B cell (primary cell): ENCODE measurements at regions of chr13 and their contacts with region 1.

Region 1: DNA sequence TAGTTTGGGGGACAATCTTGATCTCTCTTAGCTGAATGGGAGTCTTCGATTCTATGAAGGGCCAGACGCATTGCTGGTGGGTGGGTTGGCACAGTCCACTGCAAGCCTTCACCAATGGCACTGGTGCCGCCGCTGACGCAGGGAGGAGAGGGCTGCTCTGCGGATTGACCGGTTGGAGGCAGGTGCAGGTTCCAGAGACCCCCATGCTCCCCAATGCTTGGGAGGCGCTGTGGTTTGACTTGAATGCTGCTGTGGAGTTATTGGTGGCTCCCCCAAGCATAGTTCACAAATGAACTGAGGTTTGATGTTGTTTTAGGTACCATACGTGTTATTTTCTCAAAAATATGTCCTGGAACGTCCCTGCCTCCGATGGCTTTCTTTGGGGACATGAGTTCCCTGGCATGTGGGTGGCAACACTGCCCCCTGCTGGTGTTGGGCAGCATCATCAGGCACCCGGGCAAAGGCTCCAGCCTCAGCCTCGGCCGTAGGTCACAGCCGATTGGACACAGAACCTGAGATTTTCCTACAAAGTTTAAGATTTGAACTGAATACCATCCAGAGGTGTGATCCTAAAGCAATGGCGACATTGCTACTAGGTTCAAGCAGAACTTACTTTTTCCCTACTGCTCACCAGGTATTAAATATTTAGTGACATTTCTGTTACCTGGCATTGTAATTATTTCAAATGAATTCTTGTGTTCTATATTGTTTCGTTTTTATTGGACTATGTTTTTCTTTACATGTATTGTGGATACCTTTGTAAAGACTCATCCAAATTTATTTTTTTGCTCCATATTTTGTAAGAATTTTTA is 95.5 kb downstream of the ANKRD10 start:
- DNase-seq: peak; percentile 82
- ATAC-seq: peak; percentile 84
- H3K4me3 ChIP-seq: no peak overlapping the region
- H3K4me3 Mint-ChIP-seq: no peak overlapping the region
- H3K27ac ChIP-seq: no peak overlapping the region
- H3K27ac Mint-ChIP-seq: no peak overlapping the region
- H3K4me1 ChIP-seq: peaks cover 0 to 7% of the 10 kb centered on the region in 2 donors
- H3K4me1 Mint-ChIP-seq: peaks cover 3% of the 10 kb centered on the region
- H3K27me3 ChIP-seq: peaks cover 0 to 3% (median 0%) of the 10 kb centered on the region in 4 experiments
- H3K27me3 Mint-ChIP-seq: peaks cover 8% of the 10 kb centered on the region
- CTCF ChIP-seq: peak; percentile 99

Region 2: DNA sequence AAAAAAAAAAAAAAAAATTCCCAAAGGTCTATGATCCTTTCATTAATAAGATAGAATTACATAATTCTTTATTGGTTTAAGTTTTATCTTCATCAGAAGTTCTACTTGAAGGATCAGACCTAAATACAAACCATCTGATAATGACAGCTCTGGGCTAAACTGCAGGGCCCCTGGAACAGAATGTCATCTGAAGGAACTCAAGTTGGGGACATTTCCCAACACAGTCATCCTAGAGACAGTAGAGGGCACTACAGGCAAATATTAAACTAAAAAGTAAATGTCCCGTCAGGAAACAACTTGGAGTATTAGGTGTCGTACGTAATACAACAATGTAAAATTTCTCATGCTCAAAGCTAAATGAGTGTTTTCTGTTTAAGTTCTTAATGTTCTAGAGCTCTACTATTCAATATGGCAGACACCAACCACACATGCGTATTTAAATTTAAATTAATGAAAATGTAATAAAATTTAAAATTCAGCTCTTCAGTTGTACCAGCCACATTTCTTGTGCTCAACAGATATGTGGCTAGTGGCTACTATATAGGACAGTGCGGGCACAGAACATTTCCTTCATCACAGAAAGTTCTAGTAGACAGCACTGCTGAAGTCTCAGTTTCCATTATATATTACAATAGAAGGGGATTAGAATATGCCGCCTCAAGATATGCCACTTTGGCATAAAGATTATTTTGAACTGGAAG is 225.8 kb before region 1 on chr13:
- CTCF ChIA-PET with region 1: interaction called, 34 read pairs
- POLR2A ChIA-PET with region 1: interaction called, 4 read pairs
- intact Hi-C with region 1: loop called (anchors 1 kb)
- DNase-seq: peak; percentile 64
- ATAC-seq: peak; percentile 68
- H3K4me3 ChIP-seq: no peak overlapping the region
- H3K4me3 Mint-ChIP-seq: no peak overlapping the region
- H3K27ac ChIP-seq: no peak overlapping the region
- H3K27ac Mint-ChIP-seq: no peak overlapping the region
- H3K4me1 ChIP-seq: no peaks in the 10 kb centered on the region
- H3K4me1 Mint-ChIP-seq: peaks cover 4% of the 10 kb centered on the region
- H3K27me3 ChIP-seq: no peaks in the 10 kb centered on the region
- H3K27me3 Mint-ChIP-seq: no peaks in the 10 kb centered on the region
- CTCF ChIP-seq: peak; percentile 61

Region 3: GRCh38 chr13:110715395-110716235 is 103.8 kb before region 1 on chr13:
- CTCF ChIA-PET with region 1: interaction called, 8 read pairs
- POLR2A ChIA-PET with region 1: no interaction called
- intact Hi-C with region 1: loop called (anchors 2 kb)
- DNase-seq: peak; percentile 99
- ATAC-seq: peak; percentile 56
- H3K4me3 ChIP-seq: peak overlapping the region; percentile 89 to 100 (median 100)
- H3K4me3 Mint-ChIP-seq: peak overlapping the region; percentile 96
- H3K27ac ChIP-seq: peak overlapping the region; percentile 82 to 86
- H3K27ac Mint-ChIP-seq: peak overlapping the region; percentile 96
- H3K4me1 ChIP-seq: peaks cover 28 to 30% of the 10 kb centered on the region in 2 donors
- H3K4me1 Mint-ChIP-seq: peaks cover 35% of the 10 kb centered on the region
- H3K27me3 ChIP-seq: no peaks in the 10 kb centered on the region
- H3K27me3 Mint-ChIP-seq: no peaks in the 10 kb centered on the region
- CTCF ChIP-seq: peak; percentile 30